ENCODE measurements at regions of chr6 and their contacts with region 1.

Region 1: DNA sequence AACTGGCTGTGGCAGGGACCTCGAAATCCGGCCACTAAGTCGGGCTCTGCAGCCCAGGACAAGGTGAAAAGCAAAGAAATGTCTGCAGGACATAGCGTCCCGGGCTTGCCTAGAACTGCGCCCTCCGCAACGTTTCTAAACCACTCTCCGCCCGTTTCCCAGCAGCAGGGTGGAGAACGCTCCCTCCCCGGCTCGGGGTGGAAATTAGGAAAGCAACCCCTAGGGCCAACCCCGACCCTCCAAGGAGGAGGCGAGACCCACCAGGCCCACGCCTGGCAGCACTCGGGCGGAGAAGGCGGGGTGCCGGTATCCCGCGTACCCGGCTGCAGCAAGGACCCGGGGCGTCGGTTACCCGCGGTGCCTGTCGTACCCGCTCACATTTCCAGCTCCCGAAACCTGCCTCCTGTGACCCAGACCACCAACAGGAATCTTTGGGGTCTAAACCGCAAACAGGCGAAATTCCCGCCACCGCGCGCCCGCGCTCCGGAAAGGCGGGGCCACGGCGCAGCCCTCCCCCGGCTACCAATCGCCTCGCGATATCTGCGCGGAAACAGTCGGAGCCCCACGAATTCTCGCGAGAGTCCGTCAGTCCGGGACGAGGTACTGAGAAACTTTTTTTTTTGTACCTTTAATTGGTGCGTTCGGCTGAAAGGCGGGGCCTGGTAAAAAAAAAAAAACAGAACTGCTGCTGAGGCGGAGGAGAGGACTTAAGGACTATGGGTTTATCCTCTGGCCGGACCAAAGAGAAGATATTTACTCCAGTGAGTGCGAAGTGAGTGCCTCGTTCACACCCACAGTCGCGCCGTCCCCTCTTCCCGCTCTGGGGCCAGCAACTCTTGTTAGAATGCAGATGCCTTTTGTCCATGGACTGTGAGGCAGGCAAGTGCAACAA is at the start of gene MMS22L:
- DNase-seq: peak; percentile 93
- H3K4me3 ChIP-seq: peak within 1 kb of the TSS; percentile 94
- H3K4me3 Mint-ChIP-seq: peak within 1 kb of the TSS; percentile 86
- H3K27ac Mint-ChIP-seq: peak within 1 kb of the TSS; percentile 80
- H3K4me1 ChIP-seq: peaks cover 11% of the 10 kb centered on the region; the same call in 1 of the 2 replicates
- H3K4me1 Mint-ChIP-seq: no peaks in the 10 kb centered on the region
- H3K27me3 ChIP-seq: no peaks in the 10 kb centered on the region
- H3K27me3 Mint-ChIP-seq: no peaks in the 10 kb centered on the region
- CTCF ChIP-seq: no peak
- total RNA-seq, gene MMS22L: 28.2 and 32.1 TPM in 2 replicates

Region 2: DNA sequence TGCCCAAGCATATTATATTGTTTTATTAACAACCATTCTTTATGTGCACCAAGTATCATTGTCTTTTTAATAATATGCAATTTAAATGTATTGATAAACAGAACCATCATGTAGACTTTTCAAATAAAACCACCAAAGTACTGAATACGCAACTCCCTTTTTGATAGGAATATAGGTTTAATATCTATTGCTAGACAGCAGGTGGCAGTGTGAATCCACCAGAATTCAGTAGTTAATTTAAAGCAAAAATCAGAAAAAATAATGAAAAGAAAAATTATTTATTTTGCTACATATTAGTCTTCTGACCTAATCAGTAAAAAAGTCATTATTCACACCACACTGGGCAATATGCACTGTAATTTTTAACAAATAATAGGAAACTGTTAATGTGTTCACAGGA is 214.8 kb before region 1 on chr6:
- CTCF ChIA-PET with region 1: no interaction called
- POLR2A ChIA-PET with region 1: no interaction called
- intact Hi-C with region 1: loop called (anchors 10 kb)
- DNase-seq: peak in 1 of 2 experiments; percentile 32
- H3K4me3 ChIP-seq: no peak overlapping the region
- H3K4me3 Mint-ChIP-seq: no peak overlapping the region
- H3K27ac Mint-ChIP-seq: no peak overlapping the region
- H3K4me1 ChIP-seq: no peaks in the 10 kb centered on the region
- H3K4me1 Mint-ChIP-seq: peaks cover 4% of the 10 kb centered on the region
- H3K27me3 ChIP-seq: no peaks in the 10 kb centered on the region
- H3K27me3 Mint-ChIP-seq: no peaks in the 10 kb centered on the region
- CTCF ChIP-seq: peak; percentile 49 to 57

Region 3: GRCh38 chr6:97186416-97186999 is 96.5 kb before region 1 on chr6:
- CTCF ChIA-PET with region 1: no interaction called
- POLR2A ChIA-PET with region 1: no interaction called
- intact Hi-C with region 1: loop called (anchors 1 kb)
- DNase-seq: peak; percentile 65 to 73
- H3K4me3 ChIP-seq: no peak overlapping the region
- H3K4me3 Mint-ChIP-seq: no peak overlapping the region
- H3K27ac Mint-ChIP-seq: no peak overlapping the region
- H3K4me1 ChIP-seq: no peaks in the 10 kb centered on the region
- H3K4me1 Mint-ChIP-seq: no peaks in the 10 kb centered on the region
- H3K27me3 ChIP-seq: no peaks in the 10 kb centered on the region
- H3K27me3 Mint-ChIP-seq: no peaks in the 10 kb centered on the region
- CTCF ChIP-seq: peak; percentile 77 to 81

Region 4: GRCh38 chr6:97215157-97215769 is 67.7 kb before region 1 on chr6:
- CTCF ChIA-PET with region 1: interaction called, 6 read pairs
- POLR2A ChIA-PET with region 1: no interaction called
- intact Hi-C with region 1: loop called (anchors 2 kb)
- DNase-seq: peak in 1 of 2 experiments; percentile 33
- H3K4me3 ChIP-seq: no peak overlapping the region
- H3K4me3 Mint-ChIP-seq: no peak overlapping the region
- H3K27ac Mint-ChIP-seq: no peak overlapping the region
- H3K4me1 ChIP-seq: no peaks in the 10 kb centered on the region; the same call in 1 of the 2 replicates
- H3K4me1 Mint-ChIP-seq: no peaks in the 10 kb centered on the region
- H3K27me3 ChIP-seq: no peaks in the 10 kb centered on the region
- H3K27me3 Mint-ChIP-seq: no peaks in the 10 kb centered on the region
- CTCF ChIP-seq: peak; percentile 30 to 66

Region 5: GRCh38 chr6:97394160-97394748 is 111.3 kb after region 1 on chr6:
- CTCF ChIA-PET with region 1: no interaction called
- POLR2A ChIA-PET with region 1: no interaction called
- intact Hi-C with region 1: loop called (anchors 1 kb)
- DNase-seq: peak; percentile 40 to 71
- H3K4me3 ChIP-seq: no peak overlapping the region
- H3K4me3 Mint-ChIP-seq: no peak overlapping the region
- H3K27ac Mint-ChIP-seq: no peak overlapping the region
- H3K4me1 ChIP-seq: no peaks in the 10 kb centered on the region
- H3K4me1 Mint-ChIP-seq: no peaks in the 10 kb centered on the region
- H3K27me3 ChIP-seq: no peaks in the 10 kb centered on the region
- H3K27me3 Mint-ChIP-seq: peaks cover 6% of the 10 kb centered on the region
- CTCF ChIP-seq: peak; percentile 82 to 83

Region 6: DNA sequence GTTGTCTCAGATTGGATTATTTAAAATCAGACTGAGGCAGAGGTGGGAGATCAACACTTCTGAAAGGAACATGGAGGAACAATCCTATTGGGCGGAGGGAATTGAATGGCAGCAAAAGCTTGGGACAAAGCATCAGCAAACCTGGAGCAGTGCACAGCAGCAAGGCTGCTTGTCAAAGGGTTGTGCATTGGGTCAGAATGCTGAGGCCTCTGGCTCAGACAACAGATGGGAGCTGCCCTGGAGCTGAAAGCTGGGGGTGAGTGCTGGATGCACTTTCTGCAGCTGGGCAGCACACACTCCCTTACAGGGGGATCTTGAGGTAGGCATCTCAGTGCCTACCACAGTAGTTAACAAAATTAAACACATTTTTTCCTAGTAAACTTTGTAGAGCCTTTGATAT is 634.4 kb after region 1 on chr6:
- CTCF ChIA-PET with region 1: no interaction called
- POLR2A ChIA-PET with region 1: no interaction called
- intact Hi-C with region 1: no loop called
- DNase-seq: no peak
- H3K4me3 ChIP-seq: no peak overlapping the region
- H3K4me3 Mint-ChIP-seq: no peak overlapping the region
- H3K27ac Mint-ChIP-seq: no peak overlapping the region
- H3K4me1 ChIP-seq: no peaks in the 10 kb centered on the region
- H3K4me1 Mint-ChIP-seq: no peaks in the 10 kb centered on the region
- H3K27me3 ChIP-seq: no peaks in the 10 kb centered on the region
- H3K27me3 Mint-ChIP-seq: peaks cover 2% of the 10 kb centered on the region
- CTCF ChIP-seq: no peak